A549 (cell line): ENCODE measurements at regions of chr20 and their contacts with region 1.

Region 1: DNA sequence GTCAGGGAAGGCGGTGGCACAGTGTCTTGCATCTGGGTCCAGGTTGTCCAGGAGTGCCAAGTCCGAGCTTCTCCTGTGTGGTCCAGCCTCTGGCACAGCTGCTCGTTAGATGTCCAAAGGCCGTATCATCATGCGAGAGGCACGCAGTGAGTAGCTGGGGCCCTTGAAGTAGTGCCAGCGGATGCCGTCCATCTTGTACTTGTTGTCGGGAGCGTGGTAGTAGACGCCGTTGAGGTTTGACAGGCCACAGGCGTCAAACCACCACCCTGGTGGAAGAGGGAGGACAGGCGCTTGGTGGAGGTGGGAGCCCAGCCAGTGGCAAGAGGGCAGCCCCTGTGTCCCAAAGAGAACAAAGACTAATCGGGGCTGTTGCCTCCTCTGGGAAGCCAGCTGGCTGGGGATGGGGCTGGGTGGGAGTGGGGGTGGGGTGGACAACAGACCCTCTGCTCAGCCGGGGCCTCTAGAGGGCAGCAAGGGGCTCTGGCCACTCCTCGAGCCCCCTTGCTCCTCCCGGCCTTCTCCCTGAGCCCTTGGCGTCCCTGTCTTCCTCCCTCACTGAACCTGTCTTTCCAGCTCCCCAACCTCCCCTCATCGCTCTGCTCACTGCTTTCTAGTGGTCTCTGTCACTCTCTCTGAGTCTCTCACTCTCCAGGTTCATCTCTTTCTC is 39.5 kb downstream of the FAM110A start:
- DNase-seq: no peak
- ATAC-seq: peak in 1 of 2 experiments; percentile 12; a peak in 2 of 6 replicates
- H3K4me3 ChIP-seq: no peak overlapping the region
- H3K27ac ChIP-seq: no peak overlapping the region
- H3K4me1 ChIP-seq: no peaks in the 10 kb centered on the region
- CTCF ChIP-seq: no peak; the same call in 2 of the 3 replicates
- EP300 ChIP-seq: no peak
- POLR2A ChIP-seq: no peak
- RAD21 ChIP-seq: no peak

Region 2: GRCh38 chr20:891058-891705 is 18.2 kb after region 1 on chr20:
- CTCF ChIA-PET with region 1: interaction called, 12 read pairs
- POLR2A ChIA-PET with region 1: no interaction called
- DNase-seq: no peak
- ATAC-seq: no peak; a peak in 1 of 6 replicates
- H3K4me3 ChIP-seq: no peak overlapping the region
- H3K27ac ChIP-seq: no peak overlapping the region
- H3K4me1 ChIP-seq: no peaks in the 10 kb centered on the region
- CTCF ChIP-seq: no peak
- EP300 ChIP-seq: no peak
- POLR2A ChIP-seq: no peak
- RAD21 ChIP-seq: no peak